ENCODE measurements at regions of chr1 and their contacts with region 1.

Region 1: DNA sequence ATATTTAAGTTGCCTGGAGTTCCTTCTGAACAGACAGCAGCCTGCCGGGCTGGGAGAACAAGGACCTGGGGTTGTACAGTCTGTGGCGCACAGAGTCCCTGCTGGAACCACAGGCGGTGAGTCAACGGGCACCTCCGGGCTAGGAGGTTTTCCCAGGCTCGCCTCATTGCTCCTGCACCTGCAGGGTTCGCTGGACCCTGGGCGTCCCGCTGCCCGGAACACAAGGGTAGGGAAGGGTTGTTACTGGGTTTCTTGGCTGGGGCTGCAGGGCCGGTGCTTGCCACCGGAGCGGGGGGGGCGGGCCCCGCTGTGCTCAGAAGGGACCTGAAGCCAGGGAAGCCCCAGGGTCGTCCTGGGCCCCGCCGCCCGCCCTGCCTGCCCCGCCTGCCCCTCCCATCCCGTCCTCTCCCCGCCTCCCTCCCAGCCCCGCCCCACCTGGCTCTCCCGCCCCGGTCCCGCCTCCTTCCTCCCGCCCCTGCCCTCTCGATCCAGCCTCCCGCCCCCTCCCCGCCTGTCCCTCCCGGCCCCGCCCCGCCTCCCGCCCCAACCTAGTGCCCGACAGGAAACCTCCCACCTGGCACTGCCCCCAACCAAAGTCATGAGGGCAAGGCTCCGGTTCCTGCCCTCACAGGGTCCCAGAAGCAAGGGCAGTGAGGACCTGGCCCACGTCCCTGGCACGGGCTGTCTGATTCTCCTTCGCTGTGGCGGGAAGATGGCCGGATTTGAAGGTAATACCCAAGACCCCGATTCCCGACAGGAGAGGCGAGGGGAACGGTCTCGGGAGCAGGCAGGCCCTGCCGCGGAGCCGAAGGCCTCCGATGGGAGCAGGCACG is 6.8 kb downstream of the JMJD4 start:
- DNase-seq: peak; percentile 89
- ATAC-seq: peak; percentile 62
- H3K4me3 Mint-ChIP-seq: peak overlapping the region; percentile 76
- H3K27ac Mint-ChIP-seq: peak overlapping the region; percentile 81
- H3K4me1 Mint-ChIP-seq: peaks cover 16% of the 10 kb centered on the region
- H3K27me3 Mint-ChIP-seq: peaks cover 3% of the 10 kb centered on the region

Region 2: GRCh38 chr1:227542143-227543120 is 185.8 kb before region 1 on chr1:
- CTCF ChIA-PET with region 1: interaction called, 3 read pairs
- POLR2A ChIA-PET with region 1: interaction called, 4 read pairs
- intact Hi-C with region 1: loop called in 1 of 2 experiments (anchors 2 kb)
- DNase-seq: peak; percentile 95
- ATAC-seq: peak; percentile 97
- H3K4me3 Mint-ChIP-seq: peak overlapping the region; percentile 47
- H3K27ac Mint-ChIP-seq: peak overlapping the region; percentile 72
- H3K4me1 Mint-ChIP-seq: peaks cover 4% of the 10 kb centered on the region
- H3K27me3 Mint-ChIP-seq: no peaks in the 10 kb centered on the region